ENCODE measurements at regions of chr6 and their contacts with region 1.

Region 1: GRCh38 chr6:131038597-131039344 is 24.3 kb downstream of the EPB41L2 start:
- DNase-seq: no peak
- H3K4me3 ChIP-seq: no peak overlapping the region
- CTCF ChIP-seq: no peak

Region 2: DNA sequence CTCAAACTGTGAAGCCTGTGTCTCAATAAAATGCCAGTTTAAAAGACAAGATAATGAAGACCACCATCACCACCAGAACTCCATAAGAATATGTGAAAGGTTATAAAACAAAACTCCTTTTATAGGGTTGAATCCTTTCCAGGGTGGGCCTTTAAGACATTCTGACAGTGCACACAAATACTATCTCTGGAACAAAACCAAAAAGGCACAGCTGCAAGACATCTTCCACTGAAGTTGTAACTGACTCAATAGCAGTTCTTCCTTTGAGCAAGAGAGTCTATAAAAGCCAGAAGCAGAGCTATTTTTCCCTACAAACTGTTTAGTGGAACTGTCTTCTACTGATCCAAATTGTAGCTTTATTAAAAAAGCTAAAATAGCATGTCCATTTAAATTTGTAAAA is 57.4 kb before region 1 on chr6:
- in situ Hi-C with region 1: no loop called
- DNase-seq: no peak
- H3K4me3 ChIP-seq: no peak overlapping the region
- CTCF ChIP-seq: no peak

Region 3: DNA sequence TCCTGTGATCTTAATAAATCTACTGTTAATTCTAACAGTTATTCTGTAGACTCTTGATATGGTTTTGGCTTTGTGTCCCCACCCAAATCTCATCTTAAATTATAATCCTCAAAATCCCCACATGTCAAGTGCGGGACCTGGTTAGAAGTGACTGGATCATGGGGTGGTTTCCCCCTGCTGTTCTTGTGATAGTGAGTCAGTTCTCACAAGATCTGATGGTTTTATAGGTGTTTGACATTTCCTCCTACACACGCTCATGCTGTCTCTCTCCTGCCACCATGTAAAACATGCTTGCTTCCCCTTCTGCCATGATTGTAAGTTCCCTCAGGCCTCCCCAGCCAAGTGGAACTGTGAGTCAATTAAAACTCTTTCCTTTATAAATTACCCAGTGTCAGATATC is 34.8 kb after region 1 on chr6:
- in situ Hi-C with region 1: loop called (anchors 5 kb)
- DNase-seq: no peak
- H3K4me3 ChIP-seq: no peak overlapping the region
- CTCF ChIP-seq: no peak